Sciatic nerve (tissue), 2 donors: ENCODE measurements at regions of chr14 and their contacts with region 1.

Region 1: DNA sequence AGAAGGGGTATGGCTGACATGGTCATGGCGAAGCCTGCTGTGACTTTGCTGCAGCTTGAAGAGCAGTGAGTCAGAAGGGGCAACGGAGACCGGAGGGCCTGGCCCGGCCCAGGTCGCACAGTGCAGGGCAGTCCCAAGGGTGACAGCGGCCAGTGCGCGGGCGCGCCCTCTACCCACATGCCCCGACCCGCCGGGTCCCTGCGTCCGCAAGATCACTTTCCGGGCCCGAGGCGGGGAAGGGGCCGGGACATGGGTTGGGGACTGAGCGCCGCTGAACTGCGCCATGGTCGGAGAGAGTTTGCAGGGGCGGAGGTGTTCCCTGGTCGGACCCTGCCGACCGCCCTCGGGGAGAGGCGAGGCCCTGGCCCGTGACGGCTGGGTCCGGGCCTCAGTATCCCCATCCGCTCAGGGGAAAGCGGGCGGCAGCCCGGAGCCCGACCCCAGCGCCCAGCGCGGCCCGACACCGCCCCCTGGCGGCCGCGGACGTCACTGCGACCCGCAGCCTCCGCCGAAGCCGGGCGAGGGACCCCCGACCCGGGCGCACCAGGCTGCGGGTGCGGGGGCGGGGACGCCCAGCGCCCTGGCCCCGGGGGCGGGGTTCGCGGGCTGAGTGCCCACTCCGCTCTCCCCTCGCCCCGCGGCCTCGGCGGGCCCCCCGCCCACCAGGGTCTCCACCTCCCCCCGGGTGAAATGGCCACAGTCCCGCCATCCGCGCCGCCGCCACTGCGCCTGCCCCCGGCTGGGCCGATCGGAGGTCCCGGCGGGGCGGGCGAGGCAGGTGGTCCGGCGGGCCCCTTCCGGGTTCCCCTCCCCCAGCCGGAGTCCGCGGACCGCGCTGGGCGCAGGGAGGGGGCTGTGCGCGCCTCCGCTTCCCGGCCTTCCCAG is 7.2 kb upstream of the ANKRD9 start:
- DNase-seq: peak; percentile 79
- ATAC-seq: peak; percentile 77

Region 2: DNA sequence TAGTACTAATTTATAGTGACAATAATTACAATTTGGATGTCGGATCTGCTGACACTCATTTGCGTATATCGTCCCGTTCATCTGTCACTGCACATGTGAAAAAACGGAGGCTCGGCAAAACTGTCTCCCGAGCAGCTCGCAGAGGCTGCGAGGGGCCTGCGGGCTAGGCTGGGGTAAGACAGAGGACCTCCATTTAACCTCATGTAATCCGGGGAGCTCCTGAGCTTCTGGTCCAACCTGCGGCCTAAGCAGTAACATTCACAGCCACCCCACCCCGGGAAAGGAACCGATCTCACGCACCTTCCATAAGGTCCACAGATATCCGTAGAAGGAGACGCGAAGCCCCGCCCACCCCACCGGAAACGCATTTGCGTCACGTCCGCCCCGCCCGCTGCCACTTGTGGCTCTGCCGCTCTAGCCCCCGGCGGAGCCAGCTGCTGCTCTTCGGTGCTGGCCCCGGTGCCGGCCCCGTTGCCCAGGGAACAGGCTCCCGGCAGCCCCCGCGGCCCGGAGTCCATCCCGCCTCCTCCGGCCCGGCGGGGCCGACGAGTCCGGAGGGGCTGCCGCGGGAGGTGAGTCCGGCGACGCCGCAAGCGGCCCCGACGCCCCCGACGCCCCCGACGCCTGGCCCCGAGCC is 154.1 kb before region 1 on chr14 and contains the starts of genes CINP and TECPR2:
- intact Hi-C with region 1: no loop called
- DNase-seq: peak; percentile 99
- ATAC-seq: peak; percentile 100
- total RNA-seq, gene CINP: 28.1 TPM
- total RNA-seq, gene TECPR2: 36.1 TPM

Region 3: DNA sequence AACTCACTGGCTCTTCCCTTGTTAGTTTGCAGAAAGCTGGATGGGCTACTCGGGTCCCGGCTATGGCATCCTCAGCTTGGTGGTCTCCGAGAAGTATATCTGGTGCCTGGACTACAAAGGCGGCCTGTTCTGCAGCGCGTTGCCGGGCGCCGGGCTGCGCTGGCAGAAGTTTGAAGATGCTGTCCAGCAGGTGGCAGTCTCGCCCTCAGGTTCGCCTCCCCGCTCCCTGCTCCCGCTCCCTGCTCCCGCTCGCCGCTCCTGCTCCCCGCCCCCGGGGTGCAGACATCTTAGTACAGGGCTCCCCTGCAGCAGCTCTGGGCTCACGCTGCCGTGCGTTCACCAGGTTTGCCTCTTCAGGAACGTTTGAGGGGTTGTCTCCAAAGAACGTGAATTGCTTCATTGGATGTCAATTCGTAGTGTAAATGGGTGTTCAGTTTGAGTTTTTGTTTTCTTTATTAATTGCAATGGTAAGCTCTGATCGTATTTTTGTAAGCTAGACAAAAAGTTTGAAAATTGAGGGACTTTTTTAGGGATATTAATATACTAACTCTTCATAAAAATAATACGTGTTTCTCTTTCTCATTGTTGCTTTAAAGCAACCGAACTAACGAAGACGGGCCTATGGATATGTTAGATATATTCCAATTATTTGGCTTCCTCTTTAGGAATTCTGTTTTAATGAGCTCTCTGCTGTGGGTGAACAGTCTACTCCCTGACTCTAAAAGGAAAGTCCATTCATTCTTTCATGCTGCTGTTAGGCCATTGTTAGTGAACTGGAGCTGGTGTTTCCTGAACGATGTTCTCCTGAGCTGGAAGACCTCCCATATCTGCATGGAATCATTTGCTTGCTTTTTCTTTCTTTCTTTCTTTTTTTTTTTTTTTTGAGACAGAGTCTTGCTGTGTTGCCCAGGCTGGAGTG is 78.5 kb before region 1 on chr14:
- intact Hi-C with region 1: loop called (anchors 2 kb)
- DNase-seq: peak; percentile 95
- ATAC-seq: peak; percentile 98